ENCODE measurements at regions of chr1 and their contacts with region 1.

Region 1: DNA sequence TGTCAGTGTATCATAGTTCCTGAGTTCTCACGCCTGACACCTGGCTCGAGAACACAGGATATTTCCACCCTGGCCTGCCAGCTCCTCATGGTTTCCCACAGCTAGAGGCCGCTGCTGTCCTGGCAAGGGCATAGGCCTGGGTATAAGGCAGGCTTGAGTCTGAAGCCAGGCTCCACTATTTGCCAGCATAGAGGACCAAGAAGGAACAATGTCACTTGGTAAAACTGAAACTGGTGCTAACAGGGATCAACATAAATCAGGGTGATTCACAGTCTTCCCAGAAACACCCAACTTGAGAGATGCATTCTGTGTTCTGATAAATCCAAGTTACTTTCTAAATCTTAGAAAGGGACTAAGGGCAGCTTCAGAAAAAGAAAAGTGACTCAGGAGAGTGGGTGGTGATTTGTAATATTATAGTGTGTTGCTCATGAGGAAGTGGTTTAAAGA is 6.9 kb upstream of the S100A2 start:
- DNase-seq: no peak
- H3K4me3 ChIP-seq: no peak overlapping the region
- H3K27me3 ChIP-seq: no peaks in the 10 kb centered on the region
- CTCF ChIP-seq: peak; percentile 94

Region 2: GRCh38 chr1:153510984-153511410 is 61.6 kb before region 1 on chr1:
- CTCF ChIA-PET with region 1: interaction called, 223 read pairs
- POLR2A ChIA-PET with region 1: no interaction called
- DNase-seq: no peak
- H3K4me3 ChIP-seq: no peak overlapping the region
- H3K27me3 ChIP-seq: no peaks in the 10 kb centered on the region
- CTCF ChIP-seq: peak; percentile 97

Region 3: DNA sequence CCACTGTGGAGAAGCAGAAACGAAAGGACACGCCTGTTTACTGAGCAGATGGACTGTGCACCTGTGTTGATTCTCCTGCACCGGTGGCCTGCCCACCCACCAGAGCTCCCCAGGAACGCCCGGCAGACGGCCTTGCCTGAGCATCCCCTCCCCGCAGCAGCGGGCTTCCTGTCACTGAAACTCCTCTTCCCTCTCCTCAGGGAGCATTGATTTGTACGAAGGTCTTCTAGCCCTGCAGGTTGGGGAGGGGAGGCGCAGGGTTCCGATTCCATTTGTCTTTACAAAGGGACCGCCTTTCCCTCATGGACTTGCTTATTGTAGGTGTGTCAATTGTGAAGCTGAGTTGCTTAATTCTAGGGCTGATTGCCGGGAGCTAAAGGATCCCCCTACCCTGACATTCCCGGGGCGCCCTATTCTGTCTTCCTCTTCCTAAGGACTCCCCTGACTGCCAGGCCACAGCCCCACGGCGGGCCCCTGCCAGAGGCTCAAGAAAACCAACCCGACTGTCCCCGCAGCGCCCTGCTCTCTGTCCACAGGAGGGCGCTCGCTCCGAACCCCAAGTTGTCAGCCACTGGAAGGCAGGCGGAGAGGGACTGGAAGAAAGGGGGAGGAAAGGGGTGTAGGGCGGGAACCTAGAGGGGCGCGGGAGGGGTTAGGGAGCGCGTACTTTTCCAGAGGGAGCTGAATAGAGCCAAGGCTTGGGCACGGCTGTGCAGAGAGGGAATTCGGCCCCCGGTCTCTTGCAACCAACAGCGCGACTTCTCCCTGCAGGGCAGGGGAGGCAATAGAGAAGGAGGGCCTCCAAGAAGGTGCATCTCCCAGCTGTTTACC is 39.6 kb before region 1 on chr1:
- CTCF ChIA-PET with region 1: interaction called, 164 read pairs
- POLR2A ChIA-PET with region 1: interaction called, 9 read pairs
- DNase-seq: peak; percentile 36
- H3K4me3 ChIP-seq: peak overlapping the region; percentile 63
- H3K27me3 ChIP-seq: no peaks in the 10 kb centered on the region
- CTCF ChIP-seq: peak; percentile 97

Region 4: DNA sequence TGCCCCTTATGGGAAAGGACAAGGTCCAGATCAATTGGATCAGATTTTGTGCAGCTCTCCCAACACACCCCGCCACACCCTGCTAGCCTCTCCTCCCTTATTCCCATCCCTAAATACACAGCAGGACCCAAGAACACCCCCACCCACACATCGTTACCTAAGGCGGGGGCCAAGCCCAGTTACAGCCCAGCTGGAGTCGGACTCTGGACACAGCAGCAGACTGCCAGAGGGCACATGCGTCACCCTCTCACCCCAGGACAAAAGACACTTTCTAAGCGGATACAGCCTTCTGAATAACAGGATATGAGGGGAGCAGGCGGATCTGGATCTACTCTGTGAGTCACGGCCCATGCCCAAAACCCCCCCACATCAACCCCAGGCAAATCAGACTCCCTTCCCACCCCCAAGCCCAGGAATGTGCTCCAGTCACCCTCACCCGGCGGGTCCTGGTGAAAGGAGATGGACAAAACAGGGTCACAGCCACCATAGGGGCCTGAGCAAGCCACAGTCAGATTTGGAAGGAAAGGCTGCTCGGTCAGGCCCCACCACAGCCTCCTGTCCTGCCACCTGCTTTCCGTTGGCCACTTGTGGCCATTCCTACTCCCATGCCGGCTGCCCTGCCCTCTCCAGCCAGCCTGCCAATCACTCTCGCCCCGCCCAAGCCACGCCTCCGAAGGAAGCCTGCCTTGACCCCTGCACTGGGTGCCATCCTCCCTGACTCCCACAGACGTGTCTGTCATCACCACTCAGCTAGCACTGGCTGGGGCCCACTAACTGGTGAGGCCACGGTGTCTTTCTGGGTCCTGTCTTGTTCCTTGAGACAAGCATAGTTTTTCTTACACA is 36.4 kb after region 1 on chr1:
- CTCF ChIA-PET with region 1: interaction called, 194 read pairs
- POLR2A ChIA-PET with region 1: no interaction called
- DNase-seq: peak; percentile 84
- H3K4me3 ChIP-seq: peak overlapping the region; percentile 35
- H3K27me3 ChIP-seq: no peaks in the 10 kb centered on the region
- CTCF ChIP-seq: no peak

Region 5: GRCh38 chr1:153626922-153627796 is 54.6 kb after region 1 on chr1 and contains the start of gene S100A13:
- CTCF ChIA-PET with region 1: interaction called, 194 read pairs
- POLR2A ChIA-PET with region 1: interaction called, 3 read pairs
- DNase-seq: peak; percentile 69
- H3K4me3 ChIP-seq: peak within 1 kb of the TSS; percentile 57
- H3K27me3 ChIP-seq: no peaks in the 10 kb centered on the region
- CTCF ChIP-seq: peak; percentile 79
- polyA plus RNA-seq, gene S100A13: 310 and 313 TPM in 2 replicates

Region 6: DNA sequence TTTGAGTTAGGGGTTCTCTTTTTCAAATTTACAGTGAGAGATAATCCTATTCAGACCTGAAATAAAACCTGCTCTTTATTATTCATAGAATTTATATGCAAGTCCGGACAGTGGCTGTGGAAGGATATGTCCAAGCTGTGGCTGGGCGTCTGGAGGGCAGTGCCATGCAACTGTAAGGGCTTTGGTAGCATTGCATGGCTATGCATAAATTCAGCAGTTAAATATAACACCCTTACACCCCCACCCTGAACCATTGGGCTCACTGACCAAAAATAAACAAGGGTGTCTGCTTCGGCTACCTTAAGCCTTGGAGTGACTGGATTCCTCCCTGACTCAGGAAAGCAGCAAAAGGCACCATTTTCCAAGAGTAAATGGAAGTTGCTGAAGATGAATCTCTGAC is 66.7 kb after region 1 on chr1:
- CTCF ChIA-PET with region 1: interaction called, 12 read pairs
- POLR2A ChIA-PET with region 1: no interaction called
- DNase-seq: no peak
- H3K4me3 ChIP-seq: no peak overlapping the region
- H3K27me3 ChIP-seq: no peaks in the 10 kb centered on the region
- CTCF ChIP-seq: no peak

Measured in BJ (cell line).